Mammary epithelial cell (primary cell): ENCODE measurements at regions of chr2 and their contacts with region 1.

Region 1: DNA sequence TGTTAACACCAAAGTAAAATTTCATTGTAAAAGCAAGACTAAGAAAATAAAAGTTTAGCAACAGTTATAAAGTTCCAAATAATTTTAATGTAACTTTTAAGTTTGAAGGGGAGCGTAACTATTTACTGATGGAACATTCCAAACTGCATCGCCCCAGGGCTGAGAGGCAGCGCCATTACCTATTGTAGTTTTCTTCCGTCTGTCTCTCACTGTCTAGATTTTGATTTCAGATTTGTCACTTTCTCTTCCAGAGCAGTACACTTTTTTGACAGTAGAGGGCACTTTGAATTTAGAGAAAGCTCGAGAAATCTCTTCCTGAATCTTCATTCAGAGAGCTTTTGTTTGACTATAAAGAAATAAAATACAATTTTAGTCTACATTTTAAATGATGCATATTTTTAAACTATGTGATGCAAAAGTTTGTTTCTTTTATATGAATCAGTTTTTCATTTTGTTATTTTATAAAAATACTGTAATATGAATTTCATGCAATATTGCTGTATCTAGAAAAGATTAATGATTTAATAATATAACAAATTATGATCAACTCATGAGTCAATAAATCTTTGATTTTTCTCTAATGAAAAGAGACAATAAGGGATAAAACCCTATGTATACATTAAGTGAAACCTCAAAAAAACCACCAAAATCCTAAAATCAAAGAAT is 389.8 kb downstream of the FIGN start:
- DNase-seq: peak; percentile 66
- H3K4me3 ChIP-seq: no peak overlapping the region
- H3K27ac ChIP-seq: no peak overlapping the region
- H3K4me1 ChIP-seq: peaks cover 15% of the 10 kb centered on the region
- H3K27me3 ChIP-seq: no peaks in the 10 kb centered on the region
- CTCF ChIP-seq: peak; percentile 72 to 77

Region 2: GRCh38 chr2:163171786-163172531 is 174.1 kb before region 1 on chr2:
- CTCF ChIA-PET with region 1: interaction called, 5 read pairs
- dilution Hi-C with region 1: no loop called
- in situ Hi-C with region 1: no loop called
- intact Hi-C with region 1: loop called (anchors 5 kb)
- DNase-seq: peak; percentile 48
- H3K4me3 ChIP-seq: no peak overlapping the region
- H3K27ac ChIP-seq: no peak overlapping the region
- H3K4me1 ChIP-seq: no peaks in the 10 kb centered on the region
- H3K27me3 ChIP-seq: no peaks in the 10 kb centered on the region
- CTCF ChIP-seq: no peak

Region 3: GRCh38 chr2:163213661-163214389 is 132.2 kb before region 1 on chr2:
- CTCF ChIA-PET with region 1: no interaction called
- dilution Hi-C with region 1: no loop called
- in situ Hi-C with region 1: loop called in 1 of 2 experiments (anchors 25 kb)
- intact Hi-C with region 1: no loop called
- DNase-seq: peak; percentile 89
- H3K4me3 ChIP-seq: no peak overlapping the region
- H3K27ac ChIP-seq: no peak overlapping the region
- H3K4me1 ChIP-seq: peaks cover 22% of the 10 kb centered on the region
- H3K27me3 ChIP-seq: no peaks in the 10 kb centered on the region
- CTCF ChIP-seq: no peak

Region 4: GRCh38 chr2:163735685-163736432 is 389.8 kb after region 1 on chr2 and contains the start of gene FIGN:
- CTCF ChIA-PET with region 1: no interaction called
- dilution Hi-C with region 1: no loop called
- in situ Hi-C with region 1: no loop called
- intact Hi-C with region 1: loop called (anchors 5 kb)
- DNase-seq: peak; percentile 77
- H3K4me3 ChIP-seq: peak within 1 kb of the TSS; percentile 93 to 100 (median 98)
- H3K27ac ChIP-seq: peak within 1 kb of the TSS; percentile 80
- H3K4me1 ChIP-seq: peaks cover 17% of the 10 kb centered on the region
- H3K27me3 ChIP-seq: no peaks in the 10 kb centered on the region
- CTCF ChIP-seq: no peak
- total RNA-seq, gene FIGN: 2.5 to 10.7 TPM

Region 5: DNA sequence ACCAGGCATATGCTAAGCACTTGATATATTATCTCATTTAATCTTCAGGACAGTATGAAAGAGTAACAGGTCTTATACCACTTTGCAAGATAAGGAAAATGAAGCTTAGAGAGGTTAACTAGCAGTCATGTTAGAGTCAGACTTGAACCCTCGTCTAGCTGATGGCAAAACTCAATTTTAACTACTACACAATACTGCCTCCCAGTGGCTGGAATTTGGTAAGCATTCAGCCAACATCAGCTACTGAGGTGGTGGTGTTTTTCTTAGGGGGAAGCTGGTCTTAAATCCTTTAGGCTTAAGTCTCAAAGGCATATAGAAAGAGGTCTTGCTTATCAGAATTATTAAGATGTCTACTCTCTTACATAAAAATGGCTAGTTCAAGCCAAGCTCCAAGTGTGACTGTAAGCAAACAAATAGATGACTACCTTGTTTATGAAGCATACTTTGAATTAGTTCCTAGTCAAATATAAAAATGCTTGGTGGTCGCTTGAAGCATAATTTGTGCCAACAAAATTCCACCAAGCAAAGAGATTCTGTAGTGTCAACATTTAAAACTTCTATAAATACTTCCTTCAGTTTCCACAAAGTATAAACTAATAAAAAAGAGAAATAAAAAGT is 715.2 kb after region 1 on chr2:
- CTCF ChIA-PET with region 1: interaction called, 6 read pairs
- dilution Hi-C with region 1: no loop called
- in situ Hi-C with region 1: loop called in 1 of 2 experiments (anchors 25 kb)
- intact Hi-C with region 1: loop called (anchors 1 kb)
- DNase-seq: peak; percentile 28
- H3K4me3 ChIP-seq: no peak overlapping the region
- H3K27ac ChIP-seq: no peak overlapping the region
- H3K4me1 ChIP-seq: no peaks in the 10 kb centered on the region
- H3K27me3 ChIP-seq: peaks cover 3% of the 10 kb centered on the region
- CTCF ChIP-seq: peak; percentile 81 to 88